ENCODE measurements at regions of chr17 and their contacts with region 1.

Region 1: GRCh38 chr17:35953720-35954119 is 10.2 kb upstream of the LYZL6 start:
- DNase-seq: no peak
- ATAC-seq: no peak
- H3K4me3 ChIP-seq: no peak overlapping the region
- H3K27ac ChIP-seq: no peak overlapping the region
- H3K4me1 ChIP-seq: no peaks in the 10 kb centered on the region
- H3K27me3 ChIP-seq: no peaks in the 10 kb centered on the region

Region 2: DNA sequence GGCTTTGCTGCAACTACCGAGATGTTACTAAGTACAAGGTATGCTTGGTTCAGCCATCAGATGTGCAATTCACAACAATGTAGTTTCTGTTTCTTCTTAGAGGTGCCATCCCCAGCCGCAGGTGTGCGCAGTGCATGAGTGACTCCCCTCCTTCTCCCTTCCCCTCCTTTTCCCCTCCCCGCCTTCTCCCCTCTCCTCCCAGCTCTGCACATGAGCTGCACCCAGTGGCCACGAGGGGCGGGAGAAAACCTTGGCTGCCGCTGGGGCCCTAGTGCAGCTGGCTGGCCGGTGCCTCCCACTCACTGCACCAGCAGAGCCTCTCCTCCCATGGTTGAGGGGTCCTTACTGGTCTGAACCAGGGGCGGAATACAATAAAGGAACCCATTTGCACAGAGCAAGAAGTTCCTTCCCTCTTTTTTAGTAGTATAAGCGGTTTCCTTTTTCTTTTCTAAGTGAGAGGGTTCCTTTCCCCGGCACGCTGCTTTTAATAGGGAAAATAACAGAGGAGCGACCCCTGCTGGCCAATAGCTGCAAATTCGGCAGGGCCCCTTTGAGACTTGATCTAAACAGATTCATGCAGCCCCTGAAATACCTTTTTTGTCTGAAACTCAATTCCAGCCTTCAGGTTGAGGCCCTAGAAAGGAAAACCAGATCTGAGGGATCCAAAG is 55.4 kb after region 1 on chr17:
- intact Hi-C with region 1: loop called in 1 of 2 experiments (anchors 10 kb)
- DNase-seq: no peak
- ATAC-seq: no peak
- H3K4me3 ChIP-seq: no peak overlapping the region
- H3K27ac ChIP-seq: no peak overlapping the region
- H3K4me1 ChIP-seq: no peaks in the 10 kb centered on the region
- H3K27me3 ChIP-seq: no peaks in the 10 kb centered on the region

Measured in aorta (tissue), 5 donors.